Naive thymus-derived CD4-positive, alpha-beta T cell (primary cell): ENCODE measurements at regions of chr7 and their contacts with region 1.

Region 1: DNA sequence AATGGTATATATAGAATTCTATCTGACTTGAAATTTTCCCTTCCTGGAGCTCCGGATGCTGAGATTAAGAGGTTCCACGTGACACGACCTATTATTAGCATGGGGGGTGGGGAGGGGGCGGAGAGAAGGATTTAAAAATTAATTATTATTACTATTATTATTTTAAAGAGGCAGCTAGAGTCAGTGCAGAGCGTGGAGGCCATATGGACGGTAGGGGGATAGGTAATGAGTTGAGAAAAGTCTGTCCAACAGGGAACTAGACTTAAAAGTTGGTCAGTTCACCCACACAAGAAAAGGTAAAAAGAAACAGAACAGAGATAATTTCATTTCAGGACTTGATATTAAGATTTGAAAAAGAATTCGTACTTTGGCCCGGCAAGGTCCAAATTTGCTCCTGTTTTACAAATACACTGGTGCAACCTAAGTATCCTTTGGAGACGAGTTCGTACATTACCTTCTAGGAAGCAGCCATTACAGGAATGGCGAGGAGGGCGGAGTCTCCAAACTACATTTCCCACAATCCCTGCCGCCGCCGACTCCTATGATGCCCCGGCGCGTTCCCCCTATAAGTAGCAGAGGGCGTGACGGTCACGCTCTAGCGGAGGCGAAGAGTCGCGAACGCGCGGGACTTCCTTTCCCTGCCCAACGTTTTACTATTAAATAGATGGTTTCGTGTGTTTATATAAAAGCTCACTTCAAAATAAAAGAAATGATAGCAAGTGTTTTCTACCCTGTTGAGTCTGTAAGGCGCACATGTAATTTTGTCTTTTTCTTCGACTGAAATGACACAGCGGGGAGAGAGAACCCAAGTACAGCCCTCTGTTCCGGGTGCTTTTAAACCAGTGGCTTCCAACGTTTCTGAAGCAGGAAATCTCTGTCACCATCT is at the start of gene SMIM30:
- DNase-seq: peak; percentile 59 to 90 (median 86)
- ATAC-seq: peak; percentile 100
- H3K4me3 ChIP-seq: peak within 1 kb of the TSS; percentile 75
- H3K4me3 Mint-ChIP-seq: peak within 1 kb of the TSS; percentile 81 to 99 (median 96)
- H3K27ac ChIP-seq: peak within 1 kb of the TSS; percentile 80
- H3K27ac Mint-ChIP-seq: peak within 1 kb of the TSS; percentile 82 to 99 (median 94)
- H3K4me1 ChIP-seq: peaks cover 0 to 6% of the 10 kb centered on the region in 2 donors
- H3K4me1 Mint-ChIP-seq: peaks cover 6 to 32% (median 22%) of the 10 kb centered on the region in 7 donors
- H3K27me3 ChIP-seq: no peaks in the 10 kb centered on the region
- H3K27me3 Mint-ChIP-seq: no peaks in the 10 kb centered on the region
- total RNA-seq, gene SMIM30: 9.3 to 21.0 (median 20.5) TPM

Region 2: GRCh38 chr7:112206238-112207044 is 911.9 kb before region 1 on chr7 and contains the starts of genes DOCK4 and ZNF277:
- CTCF ChIA-PET with region 1: no interaction called
- POLR2A ChIA-PET with region 1: no interaction called
- intact Hi-C with region 1: loop called in 1 of 2 experiments (anchors 1 kb)
- DNase-seq: peak; percentile 97 to 100 (median 99)
- ATAC-seq: peak; percentile 93
- H3K4me3 ChIP-seq: peak within 1 kb of the TSS; percentile 94
- H3K4me3 Mint-ChIP-seq: peak within 1 kb of the TSS; percentile 93 to 99 (median 96)
- H3K27ac ChIP-seq: peak within 1 kb of the TSS; percentile 71
- H3K27ac Mint-ChIP-seq: peak within 1 kb of the TSS; percentile 60 to 95 (median 85)
- H3K4me1 ChIP-seq: peaks cover 14 to 22% of the 10 kb centered on the region in 2 donors
- H3K4me1 Mint-ChIP-seq: peaks cover 25 to 57% (median 39%) of the 10 kb centered on the region in 7 donors
- H3K27me3 ChIP-seq: peaks cover 15% of the 10 kb centered on the region in 2 donors
- H3K27me3 Mint-ChIP-seq: peaks cover 25 to 36% (median 29%) of the 10 kb centered on the region in 5 donors
- total RNA-seq, gene DOCK4: 0.19 to 3.1 (median 2.4) TPM
- total RNA-seq, gene ZNF277: 19.5 to 38.8 (median 25.9) TPM